CD8-positive, alpha-beta T cell (primary cell): ENCODE measurements at regions of chr1 and their contacts with region 1.

Region 1: DNA sequence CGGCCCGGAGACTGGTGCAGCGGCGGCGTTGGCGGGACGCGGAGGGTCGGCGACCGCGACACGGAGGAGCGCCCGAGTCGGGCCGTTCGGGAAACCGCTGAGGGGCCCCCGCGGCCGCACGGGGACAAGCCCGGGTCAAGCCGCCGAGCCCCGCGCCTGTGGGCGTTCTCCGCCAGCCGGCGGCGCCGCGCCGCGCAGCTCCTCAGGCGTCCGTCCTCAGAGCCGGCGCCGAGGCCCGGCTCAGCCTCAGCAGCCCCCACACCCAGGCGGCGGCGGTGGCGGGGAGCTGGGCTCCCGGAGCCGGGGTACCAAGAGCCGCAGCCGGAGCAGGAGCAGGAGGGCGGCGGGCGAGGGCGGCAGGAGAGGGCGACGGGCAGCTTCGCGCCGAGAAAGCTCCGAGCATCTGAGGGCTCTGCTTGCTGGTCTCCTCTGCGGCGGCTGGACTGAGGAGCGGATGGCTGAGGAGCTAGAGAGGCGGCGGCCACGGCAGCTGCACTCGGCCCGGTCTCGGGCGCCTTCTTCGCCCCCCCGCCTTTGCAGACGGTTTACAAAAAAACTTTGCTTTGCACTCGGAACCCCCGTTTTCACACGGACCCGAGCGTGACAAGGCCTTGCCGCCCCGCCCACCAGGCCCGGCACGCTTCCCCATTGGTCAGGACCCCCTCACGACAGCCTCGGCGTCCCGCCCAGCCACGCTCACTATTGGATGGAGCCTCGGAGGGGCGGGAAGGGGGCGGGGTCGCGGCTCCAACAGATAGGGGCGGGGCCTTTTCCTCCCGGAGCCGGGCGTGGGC is at the start of gene SLC30A1:
- DNase-seq: peak; percentile 98 to 100 (median 99)
- ATAC-seq: peak; percentile 92
- H3K4me3 ChIP-seq: peak within 1 kb of the TSS; percentile 84 to 93
- H3K4me3 Mint-ChIP-seq: peak within 1 kb of the TSS; percentile 93
- H3K27ac ChIP-seq: peak within 1 kb of the TSS; percentile 56 to 59
- H3K27ac Mint-ChIP-seq: peak within 1 kb of the TSS; percentile 95
- H3K4me1 ChIP-seq: peaks cover 33% of the 10 kb centered on the region
- H3K4me1 Mint-ChIP-seq: peaks cover 51% of the 10 kb centered on the region
- H3K27me3 ChIP-seq: no peaks in the 10 kb centered on the region
- H3K27me3 Mint-ChIP-seq: no peaks in the 10 kb centered on the region
- CTCF ChIP-seq: no peak
- total RNA-seq, gene SLC30A1: 9.7 to 9.8 TPM

Region 2: DNA sequence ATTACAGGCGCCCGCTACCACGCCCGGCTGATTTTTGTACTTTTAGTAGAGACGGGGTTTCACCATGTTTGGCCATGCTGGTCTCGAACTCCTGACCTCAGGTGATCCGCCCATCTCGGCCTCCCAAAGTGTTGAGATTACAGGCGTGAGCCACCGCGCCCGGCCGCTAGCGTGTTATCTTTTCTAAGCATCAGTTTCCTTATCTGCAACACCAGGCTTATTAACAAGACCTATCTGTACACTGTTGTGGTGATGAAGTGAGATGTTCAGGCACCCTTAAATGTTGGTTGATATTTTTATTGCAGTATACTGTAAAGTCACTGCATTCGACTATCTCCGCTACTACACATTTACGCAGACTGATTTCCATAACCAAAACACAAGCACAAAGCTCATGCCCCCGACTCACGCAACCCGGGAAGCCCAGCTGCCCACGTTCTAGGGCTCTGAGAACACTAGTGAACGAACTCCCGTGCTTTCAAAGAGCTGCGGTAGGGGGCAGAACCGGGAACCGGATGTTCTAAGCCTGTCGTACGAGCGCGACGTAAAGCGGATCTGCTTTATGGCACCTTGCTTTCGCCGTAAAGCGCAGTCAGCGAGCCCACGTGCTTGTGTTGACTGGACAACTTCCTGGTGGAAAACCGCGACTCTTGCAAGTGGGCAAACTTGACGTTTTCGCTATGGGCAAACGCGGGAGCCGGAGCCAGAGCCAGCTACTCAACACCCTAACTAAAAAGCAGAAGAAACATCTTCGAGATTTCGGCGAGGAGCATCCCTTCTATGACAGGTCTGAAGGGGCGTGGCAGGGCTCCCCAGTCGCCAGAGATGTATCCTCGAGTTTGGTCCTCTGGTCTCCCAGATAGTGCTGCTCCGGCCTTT is 1751.2 kb before region 1 on chr1 and contains the start of gene UTP25:
- CTCF ChIA-PET with region 1: no interaction called
- POLR2A ChIA-PET with region 1: no interaction called
- intact Hi-C with region 1: loop called in 1 of 2 experiments (anchors 10 kb)
- DNase-seq: peak; percentile 87 to 98 (median 92)
- ATAC-seq: peak; percentile 89
- H3K4me3 ChIP-seq: peak within 1 kb of the TSS; percentile 73 to 98
- H3K4me3 Mint-ChIP-seq: peak within 1 kb of the TSS; percentile 94
- H3K27ac ChIP-seq: peak within 1 kb of the TSS; percentile 73 to 89
- H3K27ac Mint-ChIP-seq: peak within 1 kb of the TSS; percentile 89
- H3K4me1 ChIP-seq: peaks cover 20% of the 10 kb centered on the region
- H3K4me1 Mint-ChIP-seq: peaks cover 42% of the 10 kb centered on the region
- H3K27me3 ChIP-seq: peaks cover 0 to 2% of the 10 kb centered on the region in 2 experiments
- H3K27me3 Mint-ChIP-seq: peaks cover 4% of the 10 kb centered on the region
- CTCF ChIP-seq: peak; percentile 78
- total RNA-seq, gene UTP25: 7.5 to 7.9 TPM

Region 3: GRCh38 chr1:211382714-211383480 is 195.9 kb before region 1 on chr1:
- CTCF ChIA-PET with region 1: no interaction called
- POLR2A ChIA-PET with region 1: no interaction called
- intact Hi-C with region 1: loop called in 1 of 2 experiments (anchors 1 kb)
- DNase-seq: peak; percentile 45 to 87 (median 76)
- ATAC-seq: peak; percentile 89
- H3K4me3 ChIP-seq: peak overlapping the region; percentile 85 to 95
- H3K4me3 Mint-ChIP-seq: peak overlapping the region; percentile 85
- H3K27ac ChIP-seq: peak overlapping the region; percentile 93 to 95
- H3K27ac Mint-ChIP-seq: peak overlapping the region; percentile 98
- H3K4me1 ChIP-seq: peaks cover 8% of the 10 kb centered on the region
- H3K4me1 Mint-ChIP-seq: peaks cover 19% of the 10 kb centered on the region
- H3K27me3 ChIP-seq: no peaks in the 10 kb centered on the region
- H3K27me3 Mint-ChIP-seq: no peaks in the 10 kb centered on the region
- CTCF ChIP-seq: no peak

Region 4: GRCh38 chr1:211625040-211625439 is 46.2 kb after region 1 on chr1:
- CTCF ChIA-PET with region 1: interaction called, 5 read pairs
- POLR2A ChIA-PET with region 1: interaction called, 3 read pairs
- intact Hi-C with region 1: loop called in 1 of 2 experiments (anchors 1 kb)
- DNase-seq: peak in 5 of 9 experiments; percentile 32 to 74 (median 44)
- ATAC-seq: peak; percentile 71
- H3K4me3 ChIP-seq: no peak overlapping the region
- H3K4me3 Mint-ChIP-seq: no peak overlapping the region
- H3K27ac ChIP-seq: no peak overlapping the region
- H3K27ac Mint-ChIP-seq: no peak overlapping the region
- H3K4me1 ChIP-seq: no peaks in the 10 kb centered on the region
- H3K4me1 Mint-ChIP-seq: peaks cover 5% of the 10 kb centered on the region
- H3K27me3 ChIP-seq: no peaks in the 10 kb centered on the region
- H3K27me3 Mint-ChIP-seq: no peaks in the 10 kb centered on the region
- CTCF ChIP-seq: no peak

Region 5: GRCh38 chr1:211830330-211831142 is 251.7 kb after region 1 on chr1 and contains the start of gene LPGAT1:
- CTCF ChIA-PET with region 1: no interaction called
- POLR2A ChIA-PET with region 1: no interaction called
- intact Hi-C with region 1: loop called in 1 of 2 experiments (anchors 2 kb)
- DNase-seq: peak; percentile 37 to 84 (median 71)
- ATAC-seq: peak; percentile 79
- H3K4me3 ChIP-seq: peak within 1 kb of the TSS; percentile 69 to 75
- H3K4me3 Mint-ChIP-seq: peak within 1 kb of the TSS; percentile 90
- H3K27ac ChIP-seq: peak within 1 kb of the TSS; percentile 50 to 78
- H3K27ac Mint-ChIP-seq: peak within 1 kb of the TSS; percentile 92
- H3K4me1 ChIP-seq: peaks cover 44% of the 10 kb centered on the region
- H3K4me1 Mint-ChIP-seq: peaks cover 64% of the 10 kb centered on the region
- H3K27me3 ChIP-seq: no peaks in the 10 kb centered on the region
- H3K27me3 Mint-ChIP-seq: no peaks in the 10 kb centered on the region
- CTCF ChIP-seq: peak; percentile 51
- total RNA-seq, gene LPGAT1: 17.9 to 19.1 TPM

Region 6: GRCh38 chr1:212558693-212559480 is 980.0 kb after region 1 on chr1:
- CTCF ChIA-PET with region 1: no interaction called
- POLR2A ChIA-PET with region 1: no interaction called
- intact Hi-C with region 1: loop called (anchors 5 to 10 kb)
- DNase-seq: peak; percentile 83 to 97 (median 92)
- ATAC-seq: peak; percentile 96
- H3K4me3 ChIP-seq: peak overlapping the region; percentile 45 to 82
- H3K4me3 Mint-ChIP-seq: peak overlapping the region; percentile 85
- H3K27ac ChIP-seq: peak overlapping the region; percentile 76 to 95
- H3K27ac Mint-ChIP-seq: peak overlapping the region; percentile 94
- H3K4me1 ChIP-seq: peaks cover 5% of the 10 kb centered on the region
- H3K4me1 Mint-ChIP-seq: peaks cover 10% of the 10 kb centered on the region
- H3K27me3 ChIP-seq: peaks cover 0 to 3% of the 10 kb centered on the region in 2 experiments
- H3K27me3 Mint-ChIP-seq: no peaks in the 10 kb centered on the region
- CTCF ChIP-seq: no peak